Activated naive CD4-positive, alpha-beta T cell treated with anti-CD3 and anti-CD28 coated beads for 36 hours (primary cell): ENCODE measurements at regions of chr16 and their contacts with region 1.

Region 1: DNA sequence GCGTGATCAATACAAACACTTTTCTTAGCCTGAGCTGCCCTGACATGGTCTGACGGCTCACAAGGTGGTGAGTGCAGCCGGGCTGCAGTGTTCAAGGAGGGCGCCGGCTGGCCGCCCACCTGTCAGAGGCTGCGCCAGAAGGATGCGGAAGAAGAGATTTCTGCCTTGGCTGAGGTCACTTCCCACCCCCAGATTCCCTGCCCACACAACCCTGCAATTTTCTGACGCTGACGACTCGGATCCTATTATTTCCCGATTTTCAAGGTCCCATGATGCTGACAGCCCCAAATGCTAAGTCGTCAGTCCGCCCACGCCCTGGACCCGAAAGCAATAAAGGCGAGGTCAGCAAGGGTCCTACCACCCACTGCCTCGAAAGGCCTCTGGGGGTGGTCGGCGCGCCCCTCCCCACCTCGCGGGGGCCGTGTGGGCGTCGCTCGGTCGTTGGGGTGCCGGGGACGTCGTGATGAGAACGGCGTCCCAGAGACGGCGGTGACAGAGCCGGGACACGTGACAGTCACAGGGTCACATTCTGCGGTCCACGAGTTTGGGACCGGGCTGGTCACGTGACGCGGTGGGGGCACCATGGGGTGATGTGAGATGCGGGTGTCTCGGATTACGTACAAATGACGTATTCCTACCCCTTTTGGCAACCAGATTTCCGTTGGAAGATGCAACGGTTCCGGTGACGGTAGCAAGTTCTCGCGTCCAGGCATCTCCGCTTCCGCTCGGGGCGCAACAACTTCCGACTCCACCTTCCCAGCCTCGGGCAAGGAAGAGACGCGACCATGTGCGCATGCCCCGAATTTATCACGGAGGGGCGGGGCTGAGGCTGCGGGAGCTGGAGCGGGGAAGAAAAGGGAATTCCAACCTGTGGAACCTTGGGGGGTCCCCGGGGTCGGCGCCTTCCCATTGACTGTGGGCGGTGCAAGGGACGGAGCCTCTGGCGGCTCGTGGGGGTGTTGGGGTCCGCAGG is at the start of gene STX4:
- DNase-seq: peak; percentile 99
- H3K4me3 Mint-ChIP-seq: peak within 1 kb of the TSS; percentile 96
- H3K27ac Mint-ChIP-seq: peak within 1 kb of the TSS; percentile 93
- H3K4me1 Mint-ChIP-seq: peaks cover 22% of the 10 kb centered on the region
- H3K27me3 Mint-ChIP-seq: no peaks in the 10 kb centered on the region
- total RNA-seq, gene STX4: 32.9 to 38.0 TPM

Region 2: GRCh38 chr16:30964574-30965226 is 68.3 kb before region 1 on chr16:
- CTCF ChIA-PET with region 1: no interaction called
- intact Hi-C with region 1: no loop called
- DNase-seq: no peak
- H3K4me3 Mint-ChIP-seq: no peak overlapping the region
- H3K27ac Mint-ChIP-seq: no peak overlapping the region
- H3K4me1 Mint-ChIP-seq: peaks cover 17% of the 10 kb centered on the region
- H3K27me3 Mint-ChIP-seq: no peaks in the 10 kb centered on the region

Region 3: DNA sequence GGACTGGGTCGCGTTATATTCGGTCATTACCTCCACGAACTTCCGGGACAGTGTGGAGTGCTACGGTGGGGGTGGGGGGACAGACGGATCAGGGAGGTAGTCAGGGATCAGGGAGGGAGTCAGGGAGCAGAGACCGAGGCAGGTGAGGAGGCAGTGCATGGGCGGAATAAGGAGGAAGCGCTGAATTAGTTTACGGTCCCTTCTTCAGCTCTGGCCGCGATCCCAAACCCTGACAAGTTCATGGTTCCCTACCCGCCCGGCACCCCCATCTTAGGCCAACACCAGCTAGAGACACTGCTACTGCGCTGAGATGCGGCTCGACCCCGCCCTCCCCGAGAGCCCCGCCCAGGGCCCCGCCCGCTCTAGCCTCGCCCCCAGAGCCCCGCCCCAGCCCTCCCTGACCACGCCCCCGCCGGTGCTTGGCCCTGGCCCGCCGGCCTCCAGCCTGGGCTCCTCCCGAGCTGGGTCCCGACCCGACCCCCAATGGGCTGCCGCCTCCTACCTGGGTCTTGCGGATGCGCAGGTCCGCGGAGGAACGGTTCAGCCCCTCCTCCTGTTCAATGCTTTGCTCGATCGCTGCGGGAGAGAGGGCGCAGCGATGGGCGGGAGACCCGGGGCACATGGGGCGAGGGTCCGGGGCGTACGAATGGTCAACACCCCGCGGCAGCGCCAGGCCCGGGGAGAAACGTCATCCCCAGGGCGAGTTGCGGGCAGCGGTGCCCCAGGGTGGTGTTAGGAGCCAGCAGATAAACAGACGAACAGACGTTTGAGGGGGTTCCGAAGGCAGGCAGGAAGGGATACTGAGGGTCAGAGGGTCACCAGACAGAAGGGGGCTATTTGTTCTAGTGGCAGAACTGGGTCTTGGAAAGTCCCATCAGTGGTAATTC is 35.8 kb before region 1 on chr16:
- CTCF ChIA-PET with region 1: no interaction called
- intact Hi-C with region 1: loop called (anchors 2 kb)
- DNase-seq: peak; percentile 86
- H3K4me3 Mint-ChIP-seq: peak overlapping the region; percentile 73
- H3K27ac Mint-ChIP-seq: no peak overlapping the region
- H3K4me1 Mint-ChIP-seq: peaks cover 11% of the 10 kb centered on the region
- H3K27me3 Mint-ChIP-seq: no peaks in the 10 kb centered on the region

Region 4: DNA sequence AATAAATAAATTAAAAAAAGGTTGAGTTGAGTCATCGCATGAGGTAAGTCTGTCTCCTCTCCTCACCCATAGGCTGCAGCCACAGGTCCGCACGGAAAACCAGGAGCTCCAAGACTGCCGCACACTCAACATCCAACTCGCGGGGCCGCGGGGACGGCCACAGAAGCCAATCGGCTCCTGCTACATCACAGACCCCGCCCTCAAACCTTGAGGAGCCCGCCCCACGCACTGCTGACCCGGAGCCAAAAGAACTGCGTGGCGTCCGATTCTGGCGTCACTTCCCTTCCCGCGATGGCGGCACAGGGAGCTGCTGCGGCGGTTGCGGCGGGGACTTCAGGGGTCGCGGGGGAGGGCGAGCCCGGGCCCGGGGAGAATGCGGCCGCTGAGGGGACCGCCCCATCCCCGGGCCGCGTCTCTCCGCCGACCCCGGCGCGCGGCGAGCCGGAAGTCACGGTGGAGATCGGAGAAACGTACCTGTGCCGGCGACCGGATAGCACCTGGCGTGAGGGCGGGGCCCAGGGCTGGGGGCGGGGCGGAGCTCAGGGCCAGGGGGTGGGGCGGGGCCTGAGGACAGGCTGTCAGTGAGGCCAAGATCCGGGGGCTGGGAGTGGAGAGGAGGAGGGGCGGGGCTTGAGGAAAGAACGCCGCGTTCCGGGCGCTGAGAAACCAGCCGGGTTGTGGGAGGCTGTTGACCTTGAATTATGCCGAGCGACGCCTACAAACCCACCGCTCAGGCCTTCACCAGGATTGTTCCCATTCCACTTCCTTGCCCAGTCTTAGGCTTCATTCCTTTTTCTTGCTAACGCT is 84.6 kb after region 1 on chr16 and contains the start of gene KAT8:
- CTCF ChIA-PET with region 1: no interaction called
- intact Hi-C with region 1: loop called (anchors 1 kb)
- DNase-seq: peak; percentile 99
- H3K4me3 Mint-ChIP-seq: peak within 1 kb of the TSS; percentile 82
- H3K27ac Mint-ChIP-seq: peak within 1 kb of the TSS; percentile 70
- H3K4me1 Mint-ChIP-seq: peaks cover 28% of the 10 kb centered on the region
- H3K27me3 Mint-ChIP-seq: no peaks in the 10 kb centered on the region
- total RNA-seq, gene KAT8: 58.1 to 64.5 TPM